ENCODE measurements at regions of chr9 and their contacts with region 1.

Region 1: GRCh38 chr9:12775679-12776512 is 1.1 kb downstream of the LURAP1L start:
- DNase-seq: peak; percentile 88
- H3K4me3 ChIP-seq: peak overlapping the region; percentile 74 to 87 (median 84)
- H3K27ac ChIP-seq: peak overlapping the region; percentile 89
- H3K4me1 ChIP-seq: peaks cover 15% of the 10 kb centered on the region
- H3K27me3 ChIP-seq: no peaks in the 10 kb centered on the region
- CTCF ChIP-seq: peak; percentile 32 to 63

Region 2: DNA sequence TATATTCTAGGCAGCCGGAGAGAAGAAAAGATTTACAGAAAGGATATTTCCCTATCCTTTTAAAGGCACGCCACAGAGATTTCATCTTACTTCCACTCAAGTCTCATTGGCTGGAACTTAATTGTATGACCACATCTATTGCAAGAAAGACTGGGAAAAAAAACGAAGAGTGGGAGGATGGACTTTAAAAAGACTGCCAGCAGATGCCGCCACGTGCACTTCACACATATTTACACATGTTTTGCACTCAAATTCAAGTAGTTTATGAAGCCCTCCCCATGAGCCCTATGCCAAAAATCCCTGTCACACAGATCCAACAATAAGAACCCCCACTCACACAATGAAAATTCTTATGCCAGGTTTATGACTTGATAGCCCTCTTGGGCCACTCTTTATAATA is 221.3 kb before region 1 on chr9:
- CTCF ChIA-PET with region 1: no interaction called
- dilution Hi-C with region 1: no loop called
- in situ Hi-C with region 1: no loop called
- intact Hi-C with region 1: no loop called
- DNase-seq: no peak
- H3K4me3 ChIP-seq: no peak overlapping the region
- H3K27ac ChIP-seq: no peak overlapping the region
- H3K4me1 ChIP-seq: no peaks in the 10 kb centered on the region
- H3K27me3 ChIP-seq: no peaks in the 10 kb centered on the region
- CTCF ChIP-seq: peak; percentile 11 to 31

Region 3: DNA sequence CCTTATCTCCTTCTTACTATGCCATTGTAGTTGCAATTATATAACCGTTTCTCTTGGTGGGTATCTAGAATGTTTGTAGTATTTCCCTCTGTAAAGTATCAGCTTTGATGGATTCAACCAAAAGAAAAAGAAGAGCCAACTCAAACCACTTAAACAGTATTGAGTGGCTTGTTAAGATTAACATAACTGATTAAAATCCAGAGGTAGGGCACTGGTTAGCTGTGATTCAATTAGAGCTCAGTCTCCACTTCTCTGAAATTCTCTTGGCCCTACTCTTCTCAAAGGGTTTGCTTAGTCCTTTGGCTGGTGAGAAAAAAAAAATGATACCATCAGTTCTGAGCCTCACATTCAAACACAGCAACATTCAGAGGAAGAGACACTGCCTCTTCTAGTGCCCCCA is 45.7 kb before region 1 on chr9:
- CTCF ChIA-PET with region 1: no interaction called
- dilution Hi-C with region 1: no loop called
- in situ Hi-C with region 1: no loop called
- intact Hi-C with region 1: no loop called
- DNase-seq: no peak
- H3K4me3 ChIP-seq: no peak overlapping the region
- H3K27ac ChIP-seq: no peak overlapping the region
- H3K4me1 ChIP-seq: no peaks in the 10 kb centered on the region
- H3K27me3 ChIP-seq: no peaks in the 10 kb centered on the region
- CTCF ChIP-seq: no peak

Region 4: GRCh38 chr9:12740845-12741244 is 35.1 kb before region 1 on chr9:
- CTCF ChIA-PET with region 1: no interaction called
- dilution Hi-C with region 1: no loop called
- in situ Hi-C with region 1: no loop called
- intact Hi-C with region 1: loop called (anchors 2 kb)
- DNase-seq: peak; percentile 88
- H3K4me3 ChIP-seq: no peak overlapping the region
- H3K27ac ChIP-seq: peak overlapping the region; percentile 87
- H3K4me1 ChIP-seq: peaks cover 18% of the 10 kb centered on the region
- H3K27me3 ChIP-seq: no peaks in the 10 kb centered on the region
- CTCF ChIP-seq: no peak

Region 5: GRCh38 chr9:12794101-12794799 is 18.4 kb after region 1 on chr9:
- CTCF ChIA-PET with region 1: no interaction called
- dilution Hi-C with region 1: no loop called
- in situ Hi-C with region 1: no loop called
- intact Hi-C with region 1: loop called (anchors 1 kb)
- DNase-seq: no peak
- H3K4me3 ChIP-seq: no peak overlapping the region
- H3K27ac ChIP-seq: no peak overlapping the region
- H3K4me1 ChIP-seq: peaks cover 16% of the 10 kb centered on the region
- H3K27me3 ChIP-seq: no peaks in the 10 kb centered on the region
- CTCF ChIP-seq: no peak

Region 6: GRCh38 chr9:12819436-12820185 is 43.7 kb after region 1 on chr9:
- CTCF ChIA-PET with region 1: interaction called, 4 read pairs
- dilution Hi-C with region 1: no loop called
- in situ Hi-C with region 1: loop called (anchors 5 kb)
- intact Hi-C with region 1: loop called (anchors 1 kb)
- DNase-seq: no peak
- H3K4me3 ChIP-seq: no peak overlapping the region
- H3K27ac ChIP-seq: peak overlapping the region; percentile 100
- H3K4me1 ChIP-seq: peaks cover 45% of the 10 kb centered on the region
- H3K27me3 ChIP-seq: no peaks in the 10 kb centered on the region
- CTCF ChIP-seq: peak; percentile 45 to 49

Region 7: DNA sequence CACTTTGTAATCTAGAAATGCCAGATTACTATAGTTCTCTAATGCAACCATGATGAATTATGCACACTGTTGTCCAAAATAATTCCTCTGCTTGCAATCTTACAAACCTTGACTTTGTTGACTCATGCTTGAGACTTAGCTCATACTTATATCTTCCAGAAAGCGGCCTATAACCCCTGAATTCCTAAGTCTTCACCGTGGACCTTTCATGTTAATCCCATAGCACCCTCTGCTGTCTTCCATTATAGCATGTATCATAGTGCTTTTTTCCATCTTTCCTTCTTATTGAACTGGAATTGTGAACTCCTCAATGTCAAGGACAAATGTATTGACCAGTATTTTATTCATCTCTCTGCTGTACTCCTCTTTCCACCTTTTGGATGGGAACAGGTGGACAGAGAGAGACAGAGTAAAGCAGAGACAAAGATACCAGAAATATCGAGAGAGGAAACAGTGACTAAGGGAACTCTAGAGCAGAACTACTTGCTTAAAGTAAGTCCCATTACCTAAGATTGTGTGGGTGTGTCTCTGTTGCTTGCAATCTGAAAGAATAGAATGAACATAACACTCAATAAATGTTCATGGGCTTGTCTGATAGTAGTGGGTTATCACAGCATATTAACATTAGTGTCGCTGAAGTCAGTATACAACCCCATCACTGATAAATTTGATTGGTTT is 109.0 kb after region 1 on chr9:
- CTCF ChIA-PET with region 1: interaction called, 17 read pairs
- dilution Hi-C with region 1: no loop called
- in situ Hi-C with region 1: no loop called
- intact Hi-C with region 1: loop called (anchors 1 kb)
- DNase-seq: peak; percentile 77
- H3K4me3 ChIP-seq: no peak overlapping the region
- H3K27ac ChIP-seq: no peak overlapping the region
- H3K4me1 ChIP-seq: no peaks in the 10 kb centered on the region
- H3K27me3 ChIP-seq: no peaks in the 10 kb centered on the region
- CTCF ChIP-seq: peak; percentile 61 to 71

Region 8: DNA sequence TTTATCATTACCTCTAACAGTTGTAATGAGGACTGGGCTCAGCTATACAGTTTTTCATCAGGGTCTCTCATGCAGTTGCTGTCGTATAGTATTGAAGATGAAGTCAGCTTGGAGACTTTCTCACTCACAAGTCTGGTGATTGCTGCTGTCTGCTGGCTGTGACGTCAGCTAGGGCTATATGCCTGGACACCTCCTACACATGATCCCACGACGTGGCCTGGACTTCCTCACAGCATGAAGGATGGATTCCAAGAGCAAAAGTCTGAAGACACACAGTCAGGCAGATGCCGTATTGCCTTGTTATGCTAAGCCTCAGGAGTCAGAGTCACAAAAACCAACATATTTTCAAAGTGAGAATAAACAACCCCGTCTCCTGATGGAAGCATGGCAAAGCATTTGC is 192.2 kb after region 1 on chr9:
- CTCF ChIA-PET with region 1: no interaction called
- dilution Hi-C with region 1: no loop called
- in situ Hi-C with region 1: no loop called
- intact Hi-C with region 1: no loop called
- DNase-seq: no peak
- H3K4me3 ChIP-seq: no peak overlapping the region
- H3K27ac ChIP-seq: no peak overlapping the region
- H3K4me1 ChIP-seq: no peaks in the 10 kb centered on the region
- H3K27me3 ChIP-seq: no peaks in the 10 kb centered on the region
- CTCF ChIP-seq: no peak

Measured in mammary epithelial cell (primary cell).